ENCODE measurements at regions of chr5 and their contacts with region 1.

Region 1: GRCh38 chr5:180328296-180329137 is 24.6 kb downstream of the GFPT2 start:
- DNase-seq: peak; percentile 82 to 84 (median 83)
- ATAC-seq: peak; percentile 85 to 95 (median 92)
- H3K4me3 ChIP-seq: no peak overlapping the region
- H3K27ac ChIP-seq: no peak overlapping the region
- H3K4me1 ChIP-seq: no peaks in the 10 kb centered on the region
- H3K27me3 ChIP-seq: no peaks in the 10 kb centered on the region
- CTCF ChIP-seq: peak; percentile 58 to 86 (median 80)
- POLR2A ChIP-seq: no peak

Region 2: GRCh38 chr5:180135128-180135955 is 193.2 kb before region 1 on chr5:
- intact Hi-C with region 1: loop called (anchors 5 to 10 kb)
- DNase-seq: peak in 1 of 3 donors; percentile 32
- ATAC-seq: peak in 2 of 4 donors; percentile 23 to 58
- H3K4me3 ChIP-seq: no peak overlapping the region
- H3K27ac ChIP-seq: no peak overlapping the region
- H3K4me1 ChIP-seq: no peaks in the 10 kb centered on the region
- H3K27me3 ChIP-seq: no peaks in the 10 kb centered on the region
- CTCF ChIP-seq: no peak
- POLR2A ChIP-seq: no peak

Measured in right lobe of liver (tissue), 6 donors.